ENCODE measurements at regions of chr1 and their contacts with region 1.

Region 1: GRCh38 chr1:196993916-196994315 is 16.6 kb downstream of the CFHR5 start:
- DNase-seq: no peak
- ATAC-seq: no peak
- H3K4me3 ChIP-seq: no peak overlapping the region
- H3K27ac ChIP-seq: no peak overlapping the region
- H3K4me1 ChIP-seq: peaks cover 7% of the 10 kb centered on the region; the same call in 1 of the 2 replicates
- H3K27me3 ChIP-seq: no peaks in the 10 kb centered on the region; a peak in 1 of 5 replicates
- CTCF ChIP-seq: no peak
- EP300 ChIP-seq: no peak
- POLR2A ChIP-seq: no peak
- RAD21 ChIP-seq: no peak

Region 2: DNA sequence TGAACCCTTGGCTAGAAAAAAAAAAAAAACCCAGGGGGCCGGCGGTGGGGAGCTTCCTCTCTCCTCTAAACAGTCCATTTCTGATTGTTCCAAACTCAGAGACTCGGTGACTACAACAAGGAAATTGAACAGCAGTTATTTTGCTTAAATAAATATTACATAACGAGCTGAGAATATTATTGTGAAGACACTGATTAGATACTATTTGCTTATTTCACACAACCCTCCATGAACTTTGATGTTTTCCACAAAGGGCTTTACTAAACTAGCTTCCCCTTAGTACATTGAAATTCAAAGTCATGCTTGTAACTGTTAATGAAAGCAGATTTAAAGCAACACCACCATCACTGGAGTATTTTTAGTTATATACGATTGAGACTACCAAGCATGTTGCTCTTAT is 16.6 kb before region 1 on chr1 and contains the start of gene CFHR5:
- CTCF ChIA-PET with region 1: no interaction called
- POLR2A ChIA-PET with region 1: no interaction called
- in situ Hi-C with region 1: no loop called
- intact Hi-C with region 1: no loop called
- DNase-seq: no peak
- ATAC-seq: no peak
- H3K4me3 ChIP-seq: no peak within 1 kb of the TSS
- H3K27ac ChIP-seq: no peak within 1 kb of the TSS
- H3K4me1 ChIP-seq: 0 out of 2 replicates have a peak, but pooled peaks cover 6% of the 10 kb centered on the region
- H3K27me3 ChIP-seq: no peaks in the 10 kb centered on the region
- CTCF ChIP-seq: no peak
- EP300 ChIP-seq: no peak
- POLR2A ChIP-seq: no peak
- RAD21 ChIP-seq: no peak
- total RNA-seq, gene CFHR5: not detected in 2 replicates

Region 3: DNA sequence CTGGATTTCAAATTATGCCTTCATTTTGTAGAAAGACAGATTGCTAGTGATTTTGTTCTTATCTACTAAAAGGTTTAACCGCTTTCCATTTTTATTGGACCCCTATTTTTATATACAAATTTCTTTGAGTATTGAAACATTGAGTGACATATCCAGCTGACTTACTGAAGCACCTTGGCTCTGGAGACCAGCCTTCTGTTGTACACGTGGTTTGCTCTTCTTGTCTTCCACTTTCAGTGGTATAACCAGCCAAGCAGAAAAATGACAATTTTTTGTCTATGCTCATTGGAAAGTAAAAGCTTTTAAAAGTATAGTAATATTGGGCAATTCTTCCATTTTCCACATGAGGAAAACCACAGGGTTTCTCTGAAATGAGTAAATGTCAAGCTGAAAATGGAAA is 68.8 kb after region 1 on chr1:
- CTCF ChIA-PET with region 1: no interaction called
- POLR2A ChIA-PET with region 1: interaction called, 3 read pairs
- in situ Hi-C with region 1: no loop called
- intact Hi-C with region 1: loop called (anchors 5 kb)
- DNase-seq: no peak
- ATAC-seq: no peak
- H3K4me3 ChIP-seq: no peak overlapping the region
- H3K27ac ChIP-seq: no peak overlapping the region
- H3K4me1 ChIP-seq: peaks cover 15% of the 10 kb centered on the region
- H3K27me3 ChIP-seq: no peaks in the 10 kb centered on the region
- CTCF ChIP-seq: no peak
- EP300 ChIP-seq: no peak
- POLR2A ChIP-seq: no peak
- RAD21 ChIP-seq: no peak

Region 4: GRCh38 chr1:197146197-197146889 is 152.4 kb after region 1 on chr1 and contains the start of gene ASPM:
- CTCF ChIA-PET with region 1: no interaction called
- POLR2A ChIA-PET with region 1: no interaction called
- in situ Hi-C with region 1: no loop called
- intact Hi-C with region 1: loop called (anchors 5 kb)
- DNase-seq: peak; percentile 91
- ATAC-seq: peak; percentile 98
- H3K4me3 ChIP-seq: peak within 1 kb of the TSS; percentile 76 to 91 (median 84)
- H3K27ac ChIP-seq: peak within 1 kb of the TSS; percentile 75
- H3K4me1 ChIP-seq: peaks cover 57% of the 10 kb centered on the region
- H3K27me3 ChIP-seq: no peaks in the 10 kb centered on the region; a peak in 1 of 5 replicates
- CTCF ChIP-seq: no peak
- EP300 ChIP-seq: no peak
- POLR2A ChIP-seq: peak in 1 of 2 experiments; percentile 45; a peak in 2 of 4 replicates
- RAD21 ChIP-seq: 0 out of 2 replicates have a peak, but pooled peaks have one; percentile 6
- total RNA-seq, gene ASPM: 29.1 and 35.8 TPM in 2 replicates

Region 5: GRCh38 chr1:198220428-198220827 is 1226.5 kb after region 1 on chr1:
- CTCF ChIA-PET with region 1: no interaction called
- POLR2A ChIA-PET with region 1: no interaction called
- in situ Hi-C with region 1: no loop called
- intact Hi-C with region 1: loop called (anchors 5 kb)
- DNase-seq: no peak
- ATAC-seq: no peak
- H3K4me3 ChIP-seq: no peak overlapping the region
- H3K27ac ChIP-seq: no peak overlapping the region
- H3K4me1 ChIP-seq: no peaks in the 10 kb centered on the region
- H3K27me3 ChIP-seq: no peaks in the 10 kb centered on the region
- CTCF ChIP-seq: no peak
- EP300 ChIP-seq: no peak
- POLR2A ChIP-seq: no peak
- RAD21 ChIP-seq: no peak

Measured in HepG2 (cell line).